MCF 10A (cell line): ENCODE measurements at regions of chr12 and their contacts with region 1.

Region 1: DNA sequence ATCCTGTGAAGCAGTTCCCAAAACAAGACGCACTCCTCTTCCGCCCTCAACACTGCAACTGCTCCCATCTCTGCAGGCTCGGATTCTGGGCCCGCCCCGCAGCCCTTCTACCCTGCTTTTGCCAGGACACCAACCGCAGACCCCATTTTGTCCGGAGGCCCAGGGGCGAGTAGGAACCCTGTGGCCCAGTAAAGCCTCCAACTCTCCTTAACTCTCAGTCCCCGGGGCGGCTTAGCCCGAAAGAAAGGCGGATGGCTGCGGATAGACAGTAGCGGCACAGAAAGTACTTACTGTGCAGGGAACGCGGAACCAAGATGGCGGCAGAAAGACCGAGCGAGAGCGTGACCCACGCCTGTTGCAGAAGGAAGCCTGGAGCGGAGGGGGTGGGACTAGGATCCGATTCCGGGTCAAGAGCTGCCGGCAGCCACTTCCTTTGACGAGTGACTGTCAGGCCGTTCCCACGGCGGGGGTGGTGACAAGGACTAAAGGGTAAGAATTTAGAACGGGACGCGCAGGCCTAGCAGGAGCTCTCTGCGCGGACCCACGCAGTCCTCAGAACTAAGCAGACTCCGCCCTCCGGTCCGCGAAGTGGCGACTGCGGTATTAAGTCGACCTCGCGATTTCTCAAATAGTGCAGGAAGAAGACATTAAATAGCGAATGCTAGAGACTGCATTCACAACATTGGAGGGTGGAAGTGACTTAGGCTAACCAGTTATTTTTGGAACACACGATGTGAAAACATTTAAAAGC is at the start of gene NACA:
- DNase-seq: peak; percentile 97
- H3K4me3 Mint-ChIP-seq: peak within 1 kb of the TSS; percentile 91
- H3K27ac Mint-ChIP-seq: peak within 1 kb of the TSS; percentile 97
- H3K4me1 Mint-ChIP-seq: peaks cover 28% of the 10 kb centered on the region
- H3K27me3 Mint-ChIP-seq: no peaks in the 10 kb centered on the region
- CTCF ChIP-seq: no peak
- total RNA-seq, gene NACA: 1,274 and 1,490 TPM in 2 replicates

Region 2: GRCh38 chr12:56630160-56630632 is 95.0 kb before region 1 on chr12 and contains the start of gene BAZ2A:
- CTCF ChIA-PET with region 1: no interaction called
- POLR2A ChIA-PET with region 1: interaction called, 32 read pairs
- intact Hi-C with region 1: no loop called
- DNase-seq: peak; percentile 83
- H3K4me3 Mint-ChIP-seq: peak within 1 kb of the TSS; percentile 71
- H3K27ac Mint-ChIP-seq: peak within 1 kb of the TSS; percentile 11
- H3K4me1 Mint-ChIP-seq: peaks cover 38% of the 10 kb centered on the region
- H3K27me3 Mint-ChIP-seq: no peaks in the 10 kb centered on the region
- CTCF ChIP-seq: no peak
- total RNA-seq, gene BAZ2A: 87.3 and 101 TPM in 2 replicates

Region 3: GRCh38 chr12:56709759-56710376 is 15.3 kb before region 1 on chr12:
- CTCF ChIA-PET with region 1: no interaction called
- POLR2A ChIA-PET with region 1: interaction called, 16 read pairs
- intact Hi-C with region 1: no loop called
- DNase-seq: no peak
- H3K4me3 Mint-ChIP-seq: no peak overlapping the region
- H3K27ac Mint-ChIP-seq: no peak overlapping the region
- H3K4me1 Mint-ChIP-seq: no peaks in the 10 kb centered on the region
- H3K27me3 Mint-ChIP-seq: no peaks in the 10 kb centered on the region
- CTCF ChIP-seq: no peak

Region 4: GRCh38 chr12:56751712-56752598 is 26.8 kb after region 1 on chr12 and contains the start of gene PRIM1:
- CTCF ChIA-PET with region 1: interaction called, 4 read pairs
- POLR2A ChIA-PET with region 1: interaction called, 13 read pairs
- intact Hi-C with region 1: no loop called
- DNase-seq: peak; percentile 80
- H3K4me3 Mint-ChIP-seq: peak within 1 kb of the TSS; percentile 87
- H3K27ac Mint-ChIP-seq: peak within 1 kb of the TSS; percentile 59
- H3K4me1 Mint-ChIP-seq: peaks cover 20% of the 10 kb centered on the region
- H3K27me3 Mint-ChIP-seq: no peaks in the 10 kb centered on the region
- CTCF ChIP-seq: peak; percentile 63
- total RNA-seq, gene PRIM1: 3.5 and 7.8 TPM in 2 replicates